CD4-positive, alpha-beta T cell (primary cell): ENCODE measurements at regions of chr12 and their contacts with region 1.

Region 1: DNA sequence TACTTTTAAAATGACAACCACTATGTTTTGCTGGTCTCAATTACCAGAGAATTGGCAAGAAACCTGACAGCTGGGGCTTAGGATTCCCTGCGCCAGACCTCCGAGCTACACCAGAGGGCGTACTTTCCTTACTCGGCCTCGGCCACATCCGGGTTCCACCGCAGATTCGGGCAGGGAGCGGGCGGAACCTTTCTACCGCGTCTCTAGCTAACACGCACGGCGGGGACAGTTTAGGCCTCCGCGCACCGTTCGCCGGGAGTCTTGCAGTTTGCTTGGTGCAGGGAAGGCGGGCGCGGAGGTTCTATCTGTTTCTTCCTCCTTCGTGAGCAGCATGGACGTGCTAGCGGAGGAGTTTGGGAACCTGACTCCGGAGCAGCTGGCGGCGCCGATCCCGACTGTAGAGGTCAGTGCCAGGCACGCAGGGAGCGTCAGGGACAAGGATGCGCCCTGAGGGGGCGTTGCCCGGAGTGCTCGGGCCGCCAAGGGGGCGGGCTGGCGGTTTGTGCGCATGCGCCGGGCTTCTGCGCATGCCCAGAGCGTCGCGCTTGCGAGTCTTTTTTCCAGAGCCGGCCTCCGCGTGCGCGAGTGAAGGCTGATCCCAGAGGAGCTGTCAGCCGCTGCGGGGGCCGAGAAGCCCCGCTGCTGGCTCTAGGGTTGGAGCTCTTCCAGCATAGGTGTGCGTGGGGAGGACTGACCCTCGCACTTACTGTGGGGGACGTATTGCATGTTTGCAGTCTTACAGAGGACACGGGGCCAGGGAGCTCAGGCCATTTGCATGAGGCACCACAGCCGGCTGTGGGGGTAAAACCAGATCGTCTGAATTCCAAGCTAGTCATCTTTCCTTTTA is at the start of gene POLR3B:
- DNase-seq: peak; percentile 93 to 98 (median 95)
- ATAC-seq: peak; percentile 93
- H3K4me3 ChIP-seq: peak within 1 kb of the TSS; percentile 66
- H3K4me3 Mint-ChIP-seq: peak within 1 kb of the TSS; percentile 86
- H3K27ac ChIP-seq: peak within 1 kb of the TSS; percentile 64 to 78
- H3K27ac Mint-ChIP-seq: peak within 1 kb of the TSS; percentile 83
- H3K4me1 ChIP-seq: peaks cover 12% of the 10 kb centered on the region
- H3K4me1 Mint-ChIP-seq: peaks cover 18% of the 10 kb centered on the region
- H3K27me3 ChIP-seq: no peaks in the 10 kb centered on the region
- H3K27me3 Mint-ChIP-seq: no peaks in the 10 kb centered on the region
- CTCF ChIP-seq: peak; percentile 88
- total RNA-seq, gene POLR3B: 2.5 to 2.6 TPM

Region 2: DNA sequence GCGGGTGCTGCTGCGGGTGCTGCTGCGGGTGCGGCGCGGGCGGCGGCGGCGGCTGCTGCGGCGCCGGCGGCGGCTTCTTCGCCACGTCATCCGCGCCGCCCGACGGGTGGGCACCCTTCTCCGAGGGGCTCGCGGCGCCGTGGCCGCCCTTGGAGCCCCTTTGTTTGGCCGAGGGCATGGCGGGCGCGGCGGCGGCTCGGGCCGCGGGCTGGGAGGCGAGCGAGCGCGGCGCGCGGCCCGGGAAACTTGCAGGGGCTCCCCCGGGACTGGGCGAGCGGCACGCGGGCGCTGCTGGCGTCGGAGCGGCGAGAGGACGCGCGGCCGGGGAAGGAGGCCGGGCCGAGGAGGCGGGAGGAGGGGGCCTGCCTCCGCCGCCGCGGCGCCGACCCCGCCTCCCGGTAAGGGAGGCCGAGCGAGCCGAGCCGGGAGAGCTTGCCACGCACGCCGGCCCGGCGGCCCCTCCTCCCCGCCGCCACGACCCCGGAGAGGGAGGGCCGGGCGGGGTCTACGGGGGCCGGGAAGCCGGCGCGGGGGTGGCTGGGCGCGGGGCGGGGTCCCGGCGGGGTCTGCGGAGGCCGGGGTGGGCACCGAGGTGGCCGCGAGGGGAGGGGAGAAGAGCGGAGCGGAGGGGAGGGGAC is 110.0 kb before region 1 on chr12 and contains the start of gene CKAP4:
- CTCF ChIA-PET with region 1: interaction called, 4 read pairs
- POLR2A ChIA-PET with region 1: interaction called, 7 read pairs
- intact Hi-C with region 1: loop called (anchors 5 kb)
- DNase-seq: peak; percentile 11 to 88 (median 54)
- ATAC-seq: peak; percentile 51
- H3K4me3 ChIP-seq: peak within 1 kb of the TSS; percentile 75
- H3K4me3 Mint-ChIP-seq: peak within 1 kb of the TSS; percentile 89
- H3K27ac ChIP-seq: peak within 1 kb of the TSS; percentile 81 to 89
- H3K27ac Mint-ChIP-seq: peak within 1 kb of the TSS; percentile 94
- H3K4me1 ChIP-seq: peaks cover 37% of the 10 kb centered on the region
- H3K4me1 Mint-ChIP-seq: peaks cover 43% of the 10 kb centered on the region
- H3K27me3 ChIP-seq: no peaks in the 10 kb centered on the region
- H3K27me3 Mint-ChIP-seq: no peaks in the 10 kb centered on the region
- CTCF ChIP-seq: no peak
- total RNA-seq, gene CKAP4: 14.7 to 15.7 TPM

Region 3: DNA sequence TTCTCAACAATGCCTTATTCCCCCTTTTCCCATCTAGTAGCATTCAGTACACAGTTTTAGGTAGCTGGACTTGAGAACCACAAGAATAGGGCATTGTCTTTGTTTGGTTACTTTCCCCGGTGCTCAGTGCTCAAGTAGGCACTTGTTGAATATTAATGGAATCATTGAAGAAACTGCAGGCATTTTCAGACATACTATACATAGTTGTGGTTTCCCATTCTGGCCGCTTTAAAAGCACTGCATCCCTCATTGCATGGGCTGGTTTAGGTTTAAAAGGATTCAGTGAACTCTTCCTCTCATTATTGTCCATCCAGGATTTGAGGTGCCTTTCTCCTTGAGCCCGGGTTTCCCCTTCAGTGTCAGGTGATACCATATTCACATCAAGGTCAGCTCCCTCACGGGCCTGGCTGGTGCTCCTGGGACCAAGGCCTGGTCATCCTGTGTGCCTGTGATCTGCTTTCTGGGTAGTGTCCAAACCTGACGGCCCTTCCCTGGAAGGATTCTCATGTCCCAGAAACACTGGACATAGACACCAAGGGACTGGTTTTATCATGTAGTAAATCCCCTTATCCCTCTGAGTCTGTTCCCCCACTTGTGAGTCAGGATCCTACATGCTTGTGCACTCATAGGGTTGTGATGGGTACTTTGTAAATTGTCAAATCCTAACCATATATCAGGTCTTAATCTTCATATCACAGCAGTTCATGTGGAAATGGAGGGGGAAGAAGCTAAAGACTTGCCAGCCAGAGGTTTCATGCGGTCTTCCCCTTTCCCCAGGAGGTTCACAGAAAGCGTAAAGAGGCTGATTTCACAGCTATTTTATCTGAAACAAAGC is 47.9 kb before region 1 on chr12:
- CTCF ChIA-PET with region 1: interaction called, 4 read pairs
- POLR2A ChIA-PET with region 1: interaction called, 81 read pairs
- intact Hi-C with region 1: loop called in 1 of 2 experiments (anchors 5 kb)
- DNase-seq: no peak
- ATAC-seq: no peak
- H3K4me3 ChIP-seq: no peak overlapping the region
- H3K4me3 Mint-ChIP-seq: peak overlapping the region; percentile 30
- H3K27ac ChIP-seq: no peak overlapping the region
- H3K27ac Mint-ChIP-seq: peak overlapping the region; percentile 5
- H3K4me1 ChIP-seq: peaks cover 26% of the 10 kb centered on the region
- H3K4me1 Mint-ChIP-seq: peaks cover 68% of the 10 kb centered on the region
- H3K27me3 ChIP-seq: no peaks in the 10 kb centered on the region
- H3K27me3 Mint-ChIP-seq: no peaks in the 10 kb centered on the region
- CTCF ChIP-seq: no peak

Region 4: GRCh38 chr12:106774005-106774807 is 416.4 kb after region 1 on chr12 and contains the start of gene RIC8B:
- CTCF ChIA-PET with region 1: no interaction called
- POLR2A ChIA-PET with region 1: no interaction called
- intact Hi-C with region 1: loop called in 1 of 2 experiments (anchors 2 kb)
- DNase-seq: peak; percentile 51 to 91 (median 72)
- ATAC-seq: peak; percentile 82
- H3K4me3 ChIP-seq: peak within 1 kb of the TSS; percentile 89
- H3K4me3 Mint-ChIP-seq: peak within 1 kb of the TSS; percentile 98
- H3K27ac ChIP-seq: peak within 1 kb of the TSS; percentile 80 to 90
- H3K27ac Mint-ChIP-seq: peak within 1 kb of the TSS; percentile 97
- H3K4me1 ChIP-seq: peaks cover 31% of the 10 kb centered on the region
- H3K4me1 Mint-ChIP-seq: peaks cover 42% of the 10 kb centered on the region
- H3K27me3 ChIP-seq: no peaks in the 10 kb centered on the region
- H3K27me3 Mint-ChIP-seq: no peaks in the 10 kb centered on the region
- CTCF ChIP-seq: no peak
- total RNA-seq, gene RIC8B: 5.5 to 9.0 TPM

Region 5: DNA sequence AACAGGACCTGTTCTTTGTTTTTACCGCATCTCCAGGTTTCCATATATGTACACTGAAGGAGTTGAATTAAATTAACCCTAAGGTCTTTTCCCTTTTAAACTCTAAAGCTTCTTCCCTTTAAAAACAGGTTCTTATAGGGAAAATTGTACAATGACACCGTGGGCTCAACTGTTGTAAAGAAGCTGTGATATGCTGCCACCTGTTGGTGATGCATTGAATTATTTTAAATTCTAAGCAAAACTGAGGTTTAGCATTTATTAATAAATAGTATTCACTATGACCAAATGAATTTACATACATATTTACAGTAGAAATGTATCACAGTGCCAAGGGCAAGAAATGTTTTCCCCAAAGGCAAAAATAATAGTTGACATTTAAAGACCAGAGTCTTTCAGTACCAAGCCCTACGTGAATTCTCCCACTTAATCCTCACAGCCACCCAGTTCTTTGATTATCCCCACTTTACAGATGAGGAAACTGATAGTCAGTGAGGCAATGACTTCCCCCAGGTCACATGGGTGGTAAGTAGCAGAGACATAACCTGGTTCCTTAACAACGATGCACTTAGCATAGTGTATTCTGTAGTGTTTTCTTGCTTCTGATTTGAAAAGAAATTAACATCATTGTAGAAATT is 562.3 kb after region 1 on chr12:
- CTCF ChIA-PET with region 1: no interaction called
- POLR2A ChIA-PET with region 1: no interaction called
- intact Hi-C with region 1: loop called in 1 of 2 experiments (anchors 1 kb)
- DNase-seq: peak in 5 of 14 experiments; percentile 7 to 72 (median 53)
- ATAC-seq: no peak
- H3K4me3 ChIP-seq: no peak overlapping the region
- H3K4me3 Mint-ChIP-seq: no peak overlapping the region
- H3K27ac ChIP-seq: no peak overlapping the region
- H3K27ac Mint-ChIP-seq: no peak overlapping the region
- H3K4me1 ChIP-seq: peaks cover 6% of the 10 kb centered on the region
- H3K4me1 Mint-ChIP-seq: peaks cover 9% of the 10 kb centered on the region
- H3K27me3 ChIP-seq: no peaks in the 10 kb centered on the region
- H3K27me3 Mint-ChIP-seq: peaks cover 14% of the 10 kb centered on the region
- CTCF ChIP-seq: peak; percentile 81

Region 6: DNA sequence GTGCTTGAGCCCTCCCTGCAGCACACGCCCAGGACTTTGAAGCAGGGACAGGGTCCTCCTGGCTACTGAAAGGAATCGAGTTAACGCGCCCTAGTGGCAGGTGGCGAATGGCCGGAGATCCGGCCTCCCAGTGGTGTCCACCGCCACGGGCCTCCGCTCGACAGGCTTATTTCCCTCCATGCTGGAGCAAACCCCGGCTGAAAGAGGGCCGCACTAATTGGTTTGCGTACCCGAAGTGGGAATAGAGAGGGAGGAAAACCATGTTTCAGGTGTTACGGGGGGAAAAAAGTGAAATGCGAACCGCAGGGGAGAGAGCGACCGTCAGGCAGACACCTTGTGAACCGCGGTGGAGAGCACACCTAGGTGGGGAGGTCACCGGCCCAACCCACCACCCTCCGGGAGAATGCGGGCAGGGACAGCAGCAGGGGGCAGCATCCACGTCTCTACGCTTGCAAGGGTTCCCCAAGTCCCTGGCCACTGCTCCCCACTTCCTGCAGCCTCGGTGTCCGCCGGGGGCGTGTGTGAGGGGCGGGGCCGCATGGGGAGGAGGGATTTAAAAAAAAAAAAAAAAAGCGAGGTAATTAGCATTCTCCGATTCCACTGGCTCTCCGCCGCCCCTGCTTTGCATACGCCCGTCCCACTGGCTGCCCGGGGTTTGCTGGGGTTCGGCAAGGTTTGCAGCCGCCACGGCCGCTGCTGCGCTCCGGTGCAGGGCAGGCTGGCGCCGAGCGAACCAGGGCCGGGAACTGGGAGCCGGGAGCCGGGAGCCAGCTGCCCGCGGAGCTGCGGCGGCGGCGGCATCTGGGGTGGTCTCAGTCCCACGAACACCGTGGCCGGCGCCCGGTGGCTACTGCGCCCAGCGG is 960.2 kb after region 1 on chr12:
- CTCF ChIA-PET with region 1: no interaction called
- POLR2A ChIA-PET with region 1: no interaction called
- intact Hi-C with region 1: loop called in 1 of 2 experiments (anchors 5 kb)
- DNase-seq: peak; percentile 69 to 94 (median 84)
- ATAC-seq: peak; percentile 56
- H3K4me3 ChIP-seq: peak overlapping the region; percentile 95
- H3K4me3 Mint-ChIP-seq: peak overlapping the region; percentile 88
- H3K27ac ChIP-seq: peak overlapping the region in 1 of 2 donors; percentile 29
- H3K27ac Mint-ChIP-seq: peak overlapping the region; percentile 78
- H3K4me1 ChIP-seq: peaks cover 38% of the 10 kb centered on the region
- H3K4me1 Mint-ChIP-seq: peaks cover 36% of the 10 kb centered on the region
- H3K27me3 ChIP-seq: no peaks in the 10 kb centered on the region
- H3K27me3 Mint-ChIP-seq: no peaks in the 10 kb centered on the region
- CTCF ChIP-seq: peak; percentile 34